ENCODE measurements at regions of chr7 and their contacts with region 1.

Region 1: GRCh38 chr7:100874577-100875355 is at the start of gene SRRT:
- DNase-seq: peak; percentile 98
- H3K4me3 Mint-ChIP-seq: peak within 1 kb of the TSS; percentile 98
- H3K27ac Mint-ChIP-seq: peak within 1 kb of the TSS; percentile 97
- H3K4me1 Mint-ChIP-seq: peaks cover 40% of the 10 kb centered on the region
- H3K27me3 Mint-ChIP-seq: no peaks in the 10 kb centered on the region
- total RNA-seq, gene SRRT: 294 and 306 TPM in 2 replicates

Region 2: GRCh38 chr7:100889761-100890634 is 15.2 kb after region 1 on chr7:
- intact Hi-C with region 1: loop called (anchors 1 kb)
- DNase-seq: peak; percentile 91
- H3K4me3 Mint-ChIP-seq: peak overlapping the region; percentile 82
- H3K27ac Mint-ChIP-seq: peak overlapping the region; percentile 67
- H3K4me1 Mint-ChIP-seq: peaks cover 42% of the 10 kb centered on the region
- H3K27me3 Mint-ChIP-seq: peaks cover 23% of the 10 kb centered on the region

Region 3: GRCh38 chr7:101085162-101085987 is 210.6 kb after region 1 on chr7 and contains the start of gene TRIM56:
- intact Hi-C with region 1: loop called (anchors 1 kb)
- DNase-seq: peak; percentile 76
- H3K4me3 Mint-ChIP-seq: peak within 1 kb of the TSS; percentile 98
- H3K27ac Mint-ChIP-seq: peak within 1 kb of the TSS; percentile 98
- H3K4me1 Mint-ChIP-seq: peaks cover 31% of the 10 kb centered on the region
- H3K27me3 Mint-ChIP-seq: no peaks in the 10 kb centered on the region
- total RNA-seq, gene TRIM56: 41.2 and 45.7 TPM in 2 replicates

Region 4: GRCh38 chr7:101251871-101252659 is 377.3 kb after region 1 on chr7:
- intact Hi-C with region 1: loop called (anchors 2 kb)
- DNase-seq: peak; percentile 98
- H3K4me3 Mint-ChIP-seq: peak overlapping the region; percentile 98
- H3K27ac Mint-ChIP-seq: peak overlapping the region; percentile 98
- H3K4me1 Mint-ChIP-seq: peaks cover 30% of the 10 kb centered on the region
- H3K27me3 Mint-ChIP-seq: peaks cover 5% of the 10 kb centered on the region

Measured in activated T-helper 1 cell treated with anti-CD3 and anti-CD28 coated beads, Interleukin-12 subunit alpha, Interleukin-12 subunit beta, Interleukin-2, Interleukin-4 antibody, amounts not matched to agents 30 ng/mL and 10 ng/mL and 1 ng/mL, durations not matched to agents 14 hours and 24 hours and 36 hours (primary cell).